Activated CD4-positive, alpha-beta T cell treated with anti-CD3 and anti-CD28 coated beads for 36 hours (primary cell): ENCODE measurements at regions of chr17 and their contacts with region 1.

Region 1: DNA sequence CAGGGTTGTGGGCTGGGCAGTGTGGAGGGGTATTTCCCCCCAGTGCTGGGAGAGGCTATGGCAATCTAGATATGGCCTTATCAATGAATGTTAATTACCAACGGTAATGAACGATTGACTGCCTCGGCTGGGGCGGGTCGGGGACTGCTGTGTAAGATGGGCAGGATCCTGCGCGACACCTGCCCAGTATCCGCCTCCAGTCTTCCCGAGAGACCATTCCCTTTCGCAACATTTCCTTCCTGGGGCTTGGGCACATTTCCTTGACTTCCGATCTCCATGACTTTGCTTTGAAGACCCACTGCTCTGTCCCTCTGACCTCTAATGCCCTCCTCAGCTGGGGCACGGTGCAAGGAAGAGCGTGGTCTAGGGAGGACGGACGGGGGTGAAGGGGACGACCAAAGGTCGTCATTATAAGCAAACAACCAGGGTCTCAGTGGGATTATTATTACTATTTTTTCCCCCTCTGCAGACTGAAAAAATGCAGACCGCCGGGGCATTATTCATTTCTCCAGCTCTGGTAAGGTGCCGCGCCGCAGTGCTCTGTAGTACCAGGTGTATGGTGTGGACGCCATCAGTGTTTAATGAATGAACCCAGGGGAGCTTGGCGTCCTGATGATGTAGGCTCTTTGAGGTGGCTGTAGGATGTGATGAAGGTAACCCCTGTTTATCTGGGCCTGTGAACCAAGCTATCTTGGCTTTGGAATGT is 506 bp downstream of the ATP5MC1 start:
- DNase-seq: peak; percentile 30
- ATAC-seq: no peak
- H3K4me3 Mint-ChIP-seq: peak overlapping the region; percentile 86
- H3K27ac Mint-ChIP-seq: peak overlapping the region; percentile 97
- H3K4me1 Mint-ChIP-seq: peaks cover 29% of the 10 kb centered on the region
- H3K27me3 Mint-ChIP-seq: no peaks in the 10 kb centered on the region

Region 2: GRCh38 chr17:48101012-48101720 is 791.9 kb before region 1 on chr17 and contains the start of gene CBX1:
- CTCF ChIA-PET with region 1: no interaction called
- POLR2A ChIA-PET with region 1: no interaction called
- intact Hi-C with region 1: loop called in 1 of 2 experiments (anchors 1 kb)
- DNase-seq: peak; percentile 97
- ATAC-seq: peak; percentile 95
- H3K4me3 Mint-ChIP-seq: peak within 1 kb of the TSS; percentile 99
- H3K27ac Mint-ChIP-seq: peak within 1 kb of the TSS; percentile 83
- H3K4me1 Mint-ChIP-seq: peaks cover 41% of the 10 kb centered on the region
- H3K27me3 Mint-ChIP-seq: no peaks in the 10 kb centered on the region
- total RNA-seq, gene CBX1: 58.6 to 66.0 TPM

Region 3: GRCh38 chr17:48795444-48796162 is 97.5 kb before region 1 on chr17:
- CTCF ChIA-PET with region 1: no interaction called
- POLR2A ChIA-PET with region 1: no interaction called
- intact Hi-C with region 1: no loop called
- DNase-seq: no peak
- ATAC-seq: no peak
- H3K4me3 Mint-ChIP-seq: no peak overlapping the region
- H3K27ac Mint-ChIP-seq: no peak overlapping the region
- H3K4me1 Mint-ChIP-seq: no peaks in the 10 kb centered on the region
- H3K27me3 Mint-ChIP-seq: peaks cover 26% of the 10 kb centered on the region

Region 4: DNA sequence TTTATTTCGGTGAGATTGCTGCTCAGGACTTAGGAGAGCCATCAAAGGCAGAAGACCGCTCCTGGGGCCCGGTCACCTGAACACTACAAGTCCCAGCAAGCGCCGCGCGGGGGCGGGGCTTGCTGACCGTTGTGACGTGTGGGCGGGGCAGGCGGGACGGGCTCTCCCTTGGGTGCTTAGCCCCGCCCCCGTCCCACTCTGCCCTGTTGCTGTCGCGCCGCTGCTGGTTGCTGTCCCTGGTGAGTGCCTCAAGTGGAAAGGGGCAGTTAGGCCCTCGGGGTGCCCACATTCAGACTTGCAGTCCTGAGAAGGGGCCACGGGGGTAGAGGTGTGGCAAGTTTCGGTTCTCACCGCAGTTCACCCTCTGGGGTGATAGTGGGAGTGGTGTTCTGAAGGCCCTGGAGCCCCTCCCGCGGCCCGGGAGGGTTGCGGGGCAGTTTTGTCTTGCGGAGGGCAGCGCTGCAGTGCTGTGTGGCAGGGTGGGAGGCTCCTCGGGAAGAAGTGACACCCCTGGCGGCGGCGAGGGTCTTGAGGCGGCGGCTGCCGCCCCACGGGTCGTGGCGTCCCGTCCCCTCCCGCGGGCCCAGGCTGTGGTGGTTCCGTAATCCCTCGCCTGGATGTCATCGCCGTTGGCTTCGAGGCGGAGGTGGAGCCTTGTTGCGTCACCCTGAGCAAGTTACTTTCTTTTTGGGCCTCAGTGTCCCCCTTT is 62.1 kb before region 1 on chr17 and contains the start of gene CALCOCO2:
- CTCF ChIA-PET with region 1: no interaction called
- POLR2A ChIA-PET with region 1: no interaction called
- intact Hi-C with region 1: loop called (anchors 1 to 2 kb)
- DNase-seq: peak; percentile 95
- ATAC-seq: peak; percentile 91
- H3K4me3 Mint-ChIP-seq: peak within 1 kb of the TSS; percentile 84
- H3K27ac Mint-ChIP-seq: peak within 1 kb of the TSS; percentile 96
- H3K4me1 Mint-ChIP-seq: peaks cover 45% of the 10 kb centered on the region
- H3K27me3 Mint-ChIP-seq: no peaks in the 10 kb centered on the region
- total RNA-seq, gene CALCOCO2: 66.7 to 102 TPM

Region 5: DNA sequence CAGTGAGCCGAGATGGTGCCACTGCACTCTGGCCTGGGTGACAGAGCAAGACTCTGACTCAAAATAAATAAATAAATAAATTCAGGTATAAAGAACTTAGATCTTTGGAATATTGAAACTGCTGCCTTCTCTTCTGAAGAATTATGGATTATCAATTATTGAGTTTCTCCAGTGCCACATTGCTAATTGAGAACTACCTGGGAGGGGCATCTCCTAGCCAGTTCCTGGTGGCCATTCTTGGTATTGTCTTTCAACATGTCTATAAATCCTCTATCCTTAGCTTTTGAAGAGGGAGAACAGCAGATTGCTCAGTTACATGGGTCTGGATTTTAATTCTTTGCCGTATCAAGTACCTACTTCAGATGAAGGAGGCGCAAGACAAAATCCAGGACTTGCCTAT is 33.1 kb before region 1 on chr17:
- CTCF ChIA-PET with region 1: no interaction called
- POLR2A ChIA-PET with region 1: no interaction called
- intact Hi-C with region 1: no loop called
- DNase-seq: no peak
- ATAC-seq: no peak
- H3K4me3 Mint-ChIP-seq: no peak overlapping the region
- H3K27ac Mint-ChIP-seq: no peak overlapping the region
- H3K4me1 Mint-ChIP-seq: no peaks in the 10 kb centered on the region
- H3K27me3 Mint-ChIP-seq: no peaks in the 10 kb centered on the region

Region 6: GRCh38 chr17:48908047-48908843 is 15.2 kb after region 1 on chr17 and contains the start of gene UBE2Z:
- CTCF ChIA-PET with region 1: interaction called, 5 read pairs
- POLR2A ChIA-PET with region 1: interaction called, 26 read pairs
- intact Hi-C with region 1: loop called (anchors 1 kb)
- DNase-seq: peak; percentile 94
- ATAC-seq: peak; percentile 86
- H3K4me3 Mint-ChIP-seq: peak within 1 kb of the TSS; percentile 89
- H3K27ac Mint-ChIP-seq: peak within 1 kb of the TSS; percentile 97
- H3K4me1 Mint-ChIP-seq: peaks cover 46% of the 10 kb centered on the region
- H3K27me3 Mint-ChIP-seq: no peaks in the 10 kb centered on the region
- total RNA-seq, gene UBE2Z: 104 TPM

Region 7: GRCh38 chr17:48944519-48945260 is 51.6 kb after region 1 on chr17 and contains the start of gene SNF8:
- CTCF ChIA-PET with region 1: interaction called, 3 read pairs
- POLR2A ChIA-PET with region 1: interaction called, 8 read pairs
- intact Hi-C with region 1: loop called (anchors 1 to 2 kb)
- DNase-seq: peak; percentile 96
- ATAC-seq: peak; percentile 95
- H3K4me3 Mint-ChIP-seq: peak within 1 kb of the TSS; percentile 92
- H3K27ac Mint-ChIP-seq: peak within 1 kb of the TSS; percentile 96
- H3K4me1 Mint-ChIP-seq: peaks cover 8% of the 10 kb centered on the region
- H3K27me3 Mint-ChIP-seq: no peaks in the 10 kb centered on the region
- total RNA-seq, gene SNF8: 59.5 to 94.0 TPM

Region 8: GRCh38 chr17:49414622-49415350 is 521.7 kb after region 1 on chr17 and contains the start of gene PHB1:
- CTCF ChIA-PET with region 1: no interaction called
- POLR2A ChIA-PET with region 1: no interaction called
- intact Hi-C with region 1: loop called in 1 of 2 experiments (anchors 1 kb)
- DNase-seq: peak; percentile 98
- ATAC-seq: peak; percentile 100
- H3K4me3 Mint-ChIP-seq: peak within 1 kb of the TSS; percentile 100
- H3K27ac Mint-ChIP-seq: peak within 1 kb of the TSS; percentile 95
- H3K4me1 Mint-ChIP-seq: peaks cover 32% of the 10 kb centered on the region
- H3K27me3 Mint-ChIP-seq: no peaks in the 10 kb centered on the region
- total RNA-seq, gene PHB1: 346 to 350 TPM